Left cardiac atrium (tissue), 4 donors: ENCODE measurements at regions of chr20 and their contacts with region 1.

Region 1: GRCh38 chr20:9119776-9120175 is 50.9 kb downstream of the PLCB4 start:
- DNase-seq: peak; percentile 48
- ATAC-seq: peak; percentile 94 to 96

Region 2: GRCh38 chr20:8571611-8572010 is 548.2 kb before region 1 on chr20:
- intact Hi-C with region 1: no loop called
- DNase-seq: no peak
- ATAC-seq: no peak

Region 3: DNA sequence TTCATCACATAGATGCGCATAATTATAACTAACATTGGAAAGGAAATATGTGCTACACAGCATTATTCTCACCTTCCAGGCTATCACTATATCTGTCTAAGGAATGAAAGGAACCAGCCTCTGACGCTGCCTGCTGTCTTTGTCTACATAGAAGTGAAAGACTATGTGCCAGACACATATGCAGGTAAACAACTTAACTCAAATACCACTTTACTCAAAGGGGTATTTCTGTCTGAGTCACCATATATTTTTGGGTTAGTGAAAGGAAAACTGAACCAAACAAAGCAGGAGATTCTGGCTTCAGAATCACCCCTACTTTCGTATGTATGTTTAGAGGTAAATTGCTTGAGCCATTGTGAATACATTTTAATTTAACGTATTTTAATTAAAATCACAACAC is 379.5 kb before region 1 on chr20:
- intact Hi-C with region 1: no loop called
- DNase-seq: no peak
- ATAC-seq: no peak

Region 4: DNA sequence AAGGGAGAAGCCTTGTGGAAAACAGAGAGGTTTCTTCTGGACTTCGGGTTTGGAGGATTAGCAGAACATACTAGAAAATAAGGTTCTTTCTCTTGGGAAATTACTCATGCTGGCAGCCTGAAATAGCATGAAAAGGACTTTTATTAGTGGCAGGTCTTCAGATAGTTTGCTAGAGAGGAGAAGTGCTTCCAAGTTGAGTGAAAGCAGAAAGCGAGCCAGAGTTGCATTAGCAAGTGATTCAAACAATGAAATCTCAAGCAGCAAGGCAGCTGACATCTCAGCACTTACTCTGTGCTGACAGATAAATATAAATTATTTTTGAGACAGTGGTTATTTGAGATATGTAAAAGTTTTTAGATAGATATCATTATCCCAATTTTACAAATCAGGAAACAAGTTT is 41.0 kb after region 1 on chr20:
- intact Hi-C with region 1: loop called in 1 of 2 experiments (anchors 10 kb)
- DNase-seq: no peak
- ATAC-seq: peak in 1 of 2 donors; percentile 76

Region 5: GRCh38 chr20:9220874-9221547 is 101.2 kb after region 1 on chr20:
- intact Hi-C with region 1: loop called in 1 of 2 experiments (anchors 10 kb)
- DNase-seq: no peak
- ATAC-seq: no peak

Region 6: GRCh38 chr20:9626357-9626756 is 506.6 kb after region 1 on chr20:
- intact Hi-C with region 1: no loop called
- DNase-seq: no peak
- ATAC-seq: no peak